ENCODE measurements at regions of chr11 and their contacts with region 1.

Region 1: GRCh38 chr11:80855975-80856524 is 1415.2 kb upstream of the TENM4 start:
- DNase-seq: peak; percentile 67
- H3K4me3 ChIP-seq: no peak overlapping the region
- H3K27ac ChIP-seq: no peak overlapping the region
- H3K4me1 ChIP-seq: peaks cover 26% of the 10 kb centered on the region
- H3K27me3 ChIP-seq: no peaks in the 10 kb centered on the region
- CTCF ChIP-seq: no peak
- POLR2A ChIP-seq: no peak

Region 2: GRCh38 chr11:80873309-80873999 is 17.4 kb after region 1 on chr11:
- CTCF ChIA-PET with region 1: interaction called, 15 read pairs
- POLR2A ChIA-PET with region 1: interaction called, 5 read pairs
- dilution Hi-C with region 1: no loop called
- intact Hi-C with region 1: no loop called
- DNase-seq: peak; percentile 66
- H3K4me3 ChIP-seq: no peak overlapping the region
- H3K27ac ChIP-seq: no peak overlapping the region
- H3K4me1 ChIP-seq: peaks cover 21% of the 10 kb centered on the region
- H3K27me3 ChIP-seq: no peaks in the 10 kb centered on the region
- CTCF ChIP-seq: no peak
- POLR2A ChIP-seq: no peak